ENCODE measurements at regions of chr22 and their contacts with region 1.

Region 1: GRCh38 chr22:45878051-45878781 is 98.7 kb downstream of the WNT7B start:
- DNase-seq: peak in 1 of 2 experiments; percentile 68
- H3K4me3 ChIP-seq: peak overlapping the region in 1 of 4 experiments; percentile 35; a peak in 1 of 8 replicates
- H3K27ac ChIP-seq: no peak overlapping the region
- H3K4me1 ChIP-seq: peaks cover 0 to 28% (median 22%) of the 10 kb centered on the region in 4 experiments; a peak in 6 of 7 replicates
- H3K27me3 ChIP-seq: peaks cover 0 to 50% (median 30%) of the 10 kb centered on the region in 4 experiments; a peak in 6 of 7 replicates
- CTCF ChIP-seq: no peak
- EP300 ChIP-seq: no peak
- POLR2A ChIP-seq: no peak
- RAD21 ChIP-seq: no peak

Region 2: DNA sequence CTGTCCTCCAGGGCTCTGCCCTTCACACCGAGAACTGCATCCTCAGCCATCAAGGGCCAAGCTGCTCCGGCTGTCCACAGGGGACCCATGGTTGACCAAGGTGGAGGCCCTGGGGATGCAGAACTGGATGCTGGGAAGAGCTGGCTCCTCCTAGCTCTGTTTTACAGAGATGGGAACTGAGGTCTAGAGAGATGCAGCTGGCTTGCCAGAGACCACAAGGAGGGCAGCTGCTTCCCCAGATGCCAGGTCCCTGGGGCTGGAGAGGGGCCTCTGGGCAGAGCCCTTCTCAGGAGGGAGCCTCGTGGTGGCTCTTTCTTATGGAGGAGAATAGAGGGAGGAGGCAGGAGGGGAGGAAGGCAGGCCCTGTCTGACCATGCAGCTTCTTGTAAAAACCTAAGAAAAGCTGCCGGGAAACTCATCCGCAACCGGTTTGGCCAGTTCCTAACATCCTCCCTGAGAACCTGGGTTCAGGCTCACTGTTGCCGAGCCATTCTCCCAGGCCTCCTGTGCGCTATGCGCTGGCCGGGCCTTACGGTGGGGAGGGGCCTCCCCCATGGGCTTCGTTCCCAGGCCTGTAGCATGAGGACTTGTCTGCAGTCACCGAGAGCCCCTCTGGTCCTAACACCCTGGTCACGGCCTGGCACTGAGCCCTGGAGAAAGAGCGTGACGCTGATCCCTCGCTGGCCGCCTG is 18.2 kb after region 1 on chr22:
- CTCF ChIA-PET with region 1: interaction called, 11 read pairs
- POLR2A ChIA-PET with region 1: no interaction called
- DNase-seq: peak in 1 of 2 experiments; percentile 79
- H3K4me3 ChIP-seq: no peak overlapping the region
- H3K27ac ChIP-seq: no peak overlapping the region
- H3K4me1 ChIP-seq: peaks cover 0 to 20% (median 13%) of the 10 kb centered on the region in 4 experiments; a peak in 6 of 7 replicates
- H3K27me3 ChIP-seq: peaks cover 0 to 5% (median under 1%) of the 10 kb centered on the region in 4 experiments; a peak in 3 of 7 replicates
- CTCF ChIP-seq: no peak
- EP300 ChIP-seq: no peak
- POLR2A ChIP-seq: 0 out of 3 replicates have a peak, but pooled peaks of 1 of the 2 experiments have one; percentile 42
- RAD21 ChIP-seq: peak in 1 of 2 experiments; percentile 14; a peak in 1 of 4 replicates

Region 3: GRCh38 chr22:45918459-45919370 is 40.5 kb after region 1 on chr22:
- CTCF ChIA-PET with region 1: no interaction called
- POLR2A ChIA-PET with region 1: no interaction called
- DNase-seq: no peak
- H3K4me3 ChIP-seq: no peak overlapping the region
- H3K27ac ChIP-seq: no peak overlapping the region
- H3K4me1 ChIP-seq: no peaks in the 10 kb centered on the region; a peak in 1 of 7 replicates
- H3K27me3 ChIP-seq: no peaks in the 10 kb centered on the region
- CTCF ChIP-seq: no peak
- EP300 ChIP-seq: no peak
- POLR2A ChIP-seq: no peak
- RAD21 ChIP-seq: no peak

Region 4: DNA sequence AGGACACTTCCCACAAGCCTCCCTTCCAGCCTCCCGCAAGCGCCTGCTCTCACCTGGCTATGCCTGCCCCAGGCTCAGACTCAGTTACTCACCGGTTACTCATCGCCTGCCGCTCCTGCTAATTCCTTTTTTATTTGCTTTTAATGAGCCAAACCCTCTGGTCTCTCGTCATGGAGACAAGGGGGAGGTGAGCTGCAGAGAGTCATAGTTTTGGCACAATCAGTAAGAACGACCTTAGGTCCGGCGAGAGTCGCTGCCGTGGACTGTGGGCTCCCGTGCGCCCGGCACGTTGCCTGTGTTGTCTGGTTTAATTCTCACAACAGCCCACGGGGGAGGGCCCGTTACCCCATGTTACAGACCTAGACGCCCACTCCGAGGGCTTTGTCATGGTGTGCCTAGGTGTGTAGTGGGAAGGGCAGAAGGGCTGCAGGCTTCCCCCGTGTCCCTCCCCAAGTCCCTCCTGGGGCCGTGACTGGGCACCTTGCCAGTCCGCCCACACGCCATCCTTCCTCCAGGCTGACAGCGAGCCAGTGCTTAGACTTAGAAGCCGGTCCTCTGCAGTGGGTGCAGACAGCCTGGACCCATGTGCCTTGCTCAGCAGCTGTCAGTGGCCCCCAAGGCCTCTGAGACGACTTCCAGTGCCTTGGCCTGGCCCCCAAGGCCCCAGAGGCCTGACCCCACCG is 56.6 kb after region 1 on chr22:
- CTCF ChIA-PET with region 1: no interaction called
- POLR2A ChIA-PET with region 1: no interaction called
- DNase-seq: no peak
- H3K4me3 ChIP-seq: no peak overlapping the region
- H3K27ac ChIP-seq: no peak overlapping the region
- H3K4me1 ChIP-seq: no peaks in the 10 kb centered on the region
- H3K27me3 ChIP-seq: no peaks in the 10 kb centered on the region; a peak in 1 of 7 replicates
- CTCF ChIP-seq: no peak
- EP300 ChIP-seq: no peak
- POLR2A ChIP-seq: no peak
- RAD21 ChIP-seq: no peak

Region 5: GRCh38 chr22:45968751-45969413 is 90.7 kb after region 1 on chr22:
- CTCF ChIA-PET with region 1: interaction called, 13 read pairs
- POLR2A ChIA-PET with region 1: no interaction called
- DNase-seq: no peak
- H3K4me3 ChIP-seq: no peak overlapping the region
- H3K27ac ChIP-seq: no peak overlapping the region
- H3K4me1 ChIP-seq: peaks cover 0 to 50% (median 35%) of the 10 kb centered on the region in 4 experiments; a peak in 6 of 7 replicates
- H3K27me3 ChIP-seq: peaks cover 38 to 77% (median 67%) of the 10 kb centered on the region in 4 experiments
- CTCF ChIP-seq: no peak
- EP300 ChIP-seq: no peak
- POLR2A ChIP-seq: no peak
- RAD21 ChIP-seq: no peak

Measured in H1 (cell line).